ENCODE measurements at regions of chr1 and their contacts with region 1.

Region 1: GRCh38 chr1:183498342-183498991 is 26.2 kb downstream of the SMG7 start:
- DNase-seq: no peak
- H3K4me3 Mint-ChIP-seq: no peak overlapping the region
- H3K27ac Mint-ChIP-seq: no peak overlapping the region
- H3K4me1 Mint-ChIP-seq: peaks cover 55% of the 10 kb centered on the region
- H3K27me3 Mint-ChIP-seq: no peaks in the 10 kb centered on the region

Region 2: DNA sequence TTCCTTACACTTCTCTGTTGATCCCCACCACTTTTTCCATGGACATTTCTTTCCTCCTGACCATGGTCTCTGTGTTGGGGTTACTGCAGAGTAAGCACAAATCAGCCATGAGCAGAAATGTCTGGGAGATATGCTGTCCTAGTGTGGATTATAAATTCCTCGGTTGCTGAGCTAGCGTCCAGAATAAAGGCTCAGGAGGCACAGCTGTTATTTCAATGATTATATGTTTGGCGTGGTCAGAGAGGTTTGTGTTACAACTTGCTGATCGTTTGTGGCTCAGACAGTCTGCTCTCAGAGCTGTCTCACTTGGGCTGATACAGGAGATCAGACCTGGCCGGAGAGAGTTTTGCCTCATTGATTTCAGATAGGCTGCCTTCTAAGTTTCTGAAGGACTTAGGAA is 349.9 kb before region 1 on chr1:
- CTCF ChIA-PET with region 1: no interaction called
- POLR2A ChIA-PET with region 1: no interaction called
- intact Hi-C with region 1: no loop called
- DNase-seq: no peak
- H3K4me3 Mint-ChIP-seq: no peak overlapping the region
- H3K27ac Mint-ChIP-seq: no peak overlapping the region
- H3K4me1 Mint-ChIP-seq: no peaks in the 10 kb centered on the region
- H3K27me3 Mint-ChIP-seq: peaks cover 2% of the 10 kb centered on the region

Region 3: GRCh38 chr1:183480971-183481441 is 17.5 kb before region 1 on chr1:
- CTCF ChIA-PET with region 1: no interaction called
- POLR2A ChIA-PET with region 1: no interaction called
- intact Hi-C with region 1: loop called (anchors 2 kb)
- DNase-seq: no peak
- H3K4me3 Mint-ChIP-seq: no peak overlapping the region
- H3K27ac Mint-ChIP-seq: no peak overlapping the region
- H3K4me1 Mint-ChIP-seq: peaks cover 59% of the 10 kb centered on the region
- H3K27me3 Mint-ChIP-seq: no peaks in the 10 kb centered on the region

Measured in activated CD4-positive, alpha-beta memory T cell treated with anti-CD3 and anti-CD28 coated beads for 36 hours (primary cell).